Posterior vena cava (tissue), 2 donors: ENCODE measurements at regions of chr4 and their contacts with region 1.

Region 1: DNA sequence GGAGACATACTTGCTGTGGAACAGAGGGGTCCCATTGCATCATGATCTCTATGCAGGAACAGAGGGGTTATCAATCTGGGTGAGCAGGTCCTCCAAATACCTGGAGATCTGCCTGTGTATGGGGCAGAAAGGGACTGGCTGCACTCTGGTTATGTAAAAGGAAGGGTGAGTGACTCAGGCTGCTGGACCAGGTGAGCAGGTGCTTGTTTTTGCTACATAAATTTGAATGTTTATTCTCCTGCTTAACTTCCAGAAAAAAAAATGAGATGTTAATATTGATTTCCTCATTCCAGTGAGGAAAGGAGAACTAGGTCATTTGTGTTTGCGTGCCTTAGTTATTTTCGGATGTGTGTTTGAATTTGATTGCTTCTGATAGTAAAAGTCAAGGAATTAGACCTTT is 225.8 kb upstream of the TRAM1L1 start:
- DNase-seq: no peak

Region 2: GRCh38 chr4:115740806-115741205 is 1570.4 kb before region 1 on chr4:
- intact Hi-C with region 1: no loop called
- DNase-seq: no peak

Region 3: DNA sequence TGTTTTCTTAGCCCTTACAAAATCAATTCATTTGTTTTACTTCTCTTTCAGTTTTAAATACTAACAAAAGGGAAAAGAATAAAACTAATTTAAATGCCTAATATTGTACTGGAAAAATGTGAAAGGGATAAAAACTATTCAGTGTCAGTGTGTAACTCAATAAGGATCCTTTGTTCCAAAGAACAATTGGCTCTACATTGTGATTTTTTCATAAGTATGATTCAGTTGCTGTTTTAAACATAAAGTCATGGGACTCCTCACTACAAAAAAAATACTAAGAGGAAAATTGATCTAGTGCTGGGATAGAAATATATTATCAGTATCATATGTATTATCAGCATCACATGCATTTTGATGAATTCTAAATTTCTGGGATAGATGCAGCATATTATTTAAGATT is 26.5 kb before region 1 on chr4:
- intact Hi-C with region 1: loop called in 1 of 2 experiments (anchors 1 kb)
- DNase-seq: no peak

Region 4: GRCh38 chr4:117334451-117335188 is 23.4 kb after region 1 on chr4:
- intact Hi-C with region 1: no loop called
- DNase-seq: no peak

Region 5: DNA sequence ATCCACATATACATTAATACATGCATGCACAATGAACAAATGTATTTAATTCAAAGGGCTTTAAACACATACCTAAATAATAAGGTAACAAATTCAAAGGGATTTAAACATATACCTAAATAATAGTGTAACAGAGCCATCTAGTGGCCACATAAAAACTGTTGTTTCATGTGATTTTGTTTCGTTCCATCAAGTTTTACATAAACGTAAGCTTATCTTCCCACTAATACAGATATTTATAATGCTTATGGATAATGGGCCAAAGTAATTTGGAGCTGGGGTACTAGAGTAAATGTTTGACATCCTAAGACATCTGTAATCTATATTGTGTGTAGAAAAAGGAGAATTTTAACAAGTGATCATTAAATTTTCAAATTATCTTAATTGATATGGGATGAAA is 959.3 kb after region 1 on chr4:
- intact Hi-C with region 1: no loop called
- DNase-seq: no peak